ENCODE measurements at regions of chr18 and their contacts with region 1.

Region 1: GRCh38 chr18:37188016-37188791 is 359.3 kb downstream of the KIAA1328 start:
- DNase-seq: no peak
- ATAC-seq: no peak
- H3K4me3 ChIP-seq: no peak overlapping the region
- H3K27ac ChIP-seq: no peak overlapping the region
- H3K4me1 ChIP-seq: no peaks in the 10 kb centered on the region
- H3K27me3 ChIP-seq: no peaks in the 10 kb centered on the region
- CTCF ChIP-seq: no peak
- POLR2A ChIP-seq: no peak

Region 2: GRCh38 chr18:37084890-37085289 is 103.3 kb before region 1 on chr18:
- in situ Hi-C with region 1: loop called in 1 of 4 experiments (anchors 25 kb)
- intact Hi-C with region 1: no loop called
- DNase-seq: no peak
- ATAC-seq: no peak
- H3K4me3 ChIP-seq: no peak overlapping the region
- H3K27ac ChIP-seq: no peak overlapping the region
- H3K4me1 ChIP-seq: no peaks in the 10 kb centered on the region
- H3K27me3 ChIP-seq: no peaks in the 10 kb centered on the region
- CTCF ChIP-seq: no peak
- POLR2A ChIP-seq: no peak

Measured in gastrocnemius medialis (tissue), 4 donors.